Activated CD4-positive, alpha-beta T cell treated with anti-CD3 and anti-CD28 coated beads, Interleukin-2, amount 10 ng/mL, durations not matched to agents 24 days and 14 days (primary cell): ENCODE measurements at regions of chr12 and their contacts with region 1.

Region 1: DNA sequence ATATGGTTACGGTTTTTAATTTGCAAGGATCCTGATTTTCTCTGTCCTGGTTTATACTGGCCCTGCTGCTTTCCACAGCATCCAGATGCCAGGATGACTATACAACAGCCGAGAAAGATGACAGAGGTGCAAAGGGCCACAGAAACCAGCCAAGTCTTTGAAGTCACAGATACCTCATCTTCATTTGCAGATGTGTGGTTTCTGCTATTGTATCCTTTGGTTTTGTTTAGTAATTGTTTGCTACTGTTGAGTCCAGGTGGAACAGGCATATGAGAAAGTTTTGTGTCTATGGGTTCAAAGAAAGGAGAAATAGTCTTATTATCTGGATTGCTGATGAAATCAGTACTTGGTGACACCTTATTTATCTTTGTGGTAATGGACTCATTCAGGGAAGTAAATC is 17.3 kb upstream of the KLHL42 start:
- DNase-seq: peak; percentile 69
- H3K4me3 Mint-ChIP-seq: no peak overlapping the region
- H3K27ac Mint-ChIP-seq: no peak overlapping the region
- H3K4me1 Mint-ChIP-seq: peaks cover 15% of the 10 kb centered on the region
- H3K27me3 Mint-ChIP-seq: no peaks in the 10 kb centered on the region

Region 2: DNA sequence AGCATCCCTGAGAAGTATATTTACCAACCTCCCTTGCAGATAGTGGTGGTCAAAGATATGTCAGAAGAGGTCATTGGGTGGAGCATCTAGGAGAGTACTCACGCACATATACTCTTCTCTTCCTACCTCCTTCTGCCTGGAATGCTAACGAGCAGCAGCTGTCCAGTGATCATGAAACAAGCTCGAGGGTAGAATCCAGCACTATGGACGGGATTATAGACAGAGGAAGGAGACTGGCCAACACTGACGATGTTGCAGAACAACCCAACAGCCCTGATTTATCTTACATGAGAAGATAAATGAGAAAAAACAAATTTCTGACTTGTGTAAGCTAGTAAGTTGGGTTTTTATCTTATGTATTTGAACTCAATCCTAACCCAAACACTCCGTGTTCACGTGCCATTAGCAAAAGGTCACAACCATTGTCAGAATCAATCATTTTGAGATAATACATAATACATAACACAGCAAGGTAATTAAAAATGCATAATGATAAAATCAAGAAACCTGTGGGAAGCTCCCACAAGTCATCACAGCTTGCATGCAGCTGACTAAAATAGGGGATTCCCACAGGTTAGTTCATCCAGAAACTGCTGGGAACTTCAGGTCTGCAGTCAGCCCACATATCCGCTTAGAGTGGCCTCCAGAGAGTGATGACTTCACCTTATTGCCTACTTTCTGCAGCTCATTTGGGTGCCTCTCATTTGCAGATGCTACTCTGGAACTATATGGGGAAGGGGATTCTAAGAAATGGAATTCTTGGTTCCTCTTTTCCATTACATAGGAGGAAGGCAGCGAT is 554.9 kb before region 1 on chr12:
- intact Hi-C with region 1: no loop called
- DNase-seq: peak; percentile 76
- H3K4me3 Mint-ChIP-seq: no peak overlapping the region
- H3K27ac Mint-ChIP-seq: peak overlapping the region; percentile 47
- H3K4me1 Mint-ChIP-seq: peaks cover 21% of the 10 kb centered on the region
- H3K27me3 Mint-ChIP-seq: no peaks in the 10 kb centered on the region

Region 3: DNA sequence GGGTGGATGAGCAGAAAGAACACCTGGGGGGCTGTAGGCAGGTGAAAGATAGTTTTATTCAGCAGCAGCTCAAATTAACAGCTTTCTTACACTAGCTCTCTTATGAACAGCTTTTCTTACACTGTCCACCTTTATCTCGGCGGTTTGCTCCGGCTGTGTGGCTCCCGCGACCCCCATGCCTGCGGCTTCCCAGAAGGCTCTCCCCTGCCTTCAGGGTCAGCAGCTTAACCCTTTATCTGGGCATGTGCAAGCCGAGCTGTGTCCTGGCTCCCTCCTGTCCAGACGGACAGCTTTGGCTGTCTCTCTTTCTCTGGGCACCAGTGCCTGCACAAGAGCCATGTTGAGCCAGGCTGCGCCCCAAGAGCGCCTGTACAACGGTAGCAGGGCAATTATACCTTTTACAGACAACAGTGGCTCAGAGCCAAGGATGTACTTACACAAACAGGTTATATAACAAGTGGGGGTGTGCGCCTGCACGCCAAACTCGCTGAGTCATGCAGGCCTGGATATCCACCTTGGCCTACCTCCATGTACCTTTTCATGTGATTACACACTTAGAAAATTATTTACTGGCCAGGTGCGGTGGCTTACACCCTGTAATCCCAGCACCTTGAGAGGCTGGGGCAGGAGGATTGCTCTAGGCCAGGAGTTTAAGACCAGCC is 11.2 kb before region 1 on chr12:
- intact Hi-C with region 1: no loop called
- DNase-seq: no peak
- H3K4me3 Mint-ChIP-seq: no peak overlapping the region
- H3K27ac Mint-ChIP-seq: no peak overlapping the region
- H3K4me1 Mint-ChIP-seq: peaks cover 3% of the 10 kb centered on the region
- H3K27me3 Mint-ChIP-seq: no peaks in the 10 kb centered on the region

Region 4: DNA sequence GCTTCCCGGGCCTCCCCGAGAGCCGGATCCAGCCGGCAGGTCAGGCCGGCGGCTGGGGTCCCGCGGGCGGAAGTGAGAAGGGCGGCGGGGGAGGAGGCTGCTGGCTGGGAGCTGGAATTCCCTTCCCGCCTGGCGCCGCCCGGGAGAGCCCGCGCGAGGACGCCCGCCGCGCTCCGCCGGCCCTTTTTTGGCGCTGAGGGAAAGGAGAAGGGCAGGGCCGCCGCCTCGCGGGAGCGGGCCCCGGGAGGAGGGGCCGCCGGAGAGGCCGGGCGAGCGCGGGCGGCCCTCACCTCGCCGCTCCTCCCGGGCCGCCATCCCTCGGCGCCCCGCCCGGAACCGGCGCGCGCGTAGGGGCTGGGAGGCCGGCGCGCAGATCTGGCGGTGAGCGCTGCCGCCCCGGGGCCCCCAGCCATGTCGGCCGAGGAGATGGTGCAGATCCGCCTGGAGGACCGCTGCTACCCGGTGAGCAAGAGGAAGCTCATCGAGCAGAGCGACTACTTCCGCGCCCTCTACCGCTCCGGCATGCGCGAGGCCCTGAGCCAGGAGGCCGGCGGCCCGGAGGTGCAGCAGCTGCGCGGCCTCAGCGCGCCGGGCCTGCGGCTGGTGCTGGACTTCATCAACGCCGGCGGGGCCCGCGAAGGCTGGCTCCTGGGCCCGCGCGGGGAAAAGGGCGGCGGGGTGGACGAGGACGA is 17.3 kb after region 1 on chr12 and contains the starts of genes KLHL42 and MANSC4:
- intact Hi-C with region 1: loop called (anchors 2 kb)
- DNase-seq: peak; percentile 91
- H3K4me3 Mint-ChIP-seq: peak within 1 kb of the TSS; percentile 84
- H3K27ac Mint-ChIP-seq: peak within 1 kb of the TSS; percentile 82
- H3K4me1 Mint-ChIP-seq: peaks cover 29% of the 10 kb centered on the region
- H3K27me3 Mint-ChIP-seq: peaks cover 20% of the 10 kb centered on the region
- total RNA-seq, gene KLHL42: 13.6 and 14.5 TPM in 2 replicates
- total RNA-seq, gene MANSC4: not detected in 2 replicates

Region 5: DNA sequence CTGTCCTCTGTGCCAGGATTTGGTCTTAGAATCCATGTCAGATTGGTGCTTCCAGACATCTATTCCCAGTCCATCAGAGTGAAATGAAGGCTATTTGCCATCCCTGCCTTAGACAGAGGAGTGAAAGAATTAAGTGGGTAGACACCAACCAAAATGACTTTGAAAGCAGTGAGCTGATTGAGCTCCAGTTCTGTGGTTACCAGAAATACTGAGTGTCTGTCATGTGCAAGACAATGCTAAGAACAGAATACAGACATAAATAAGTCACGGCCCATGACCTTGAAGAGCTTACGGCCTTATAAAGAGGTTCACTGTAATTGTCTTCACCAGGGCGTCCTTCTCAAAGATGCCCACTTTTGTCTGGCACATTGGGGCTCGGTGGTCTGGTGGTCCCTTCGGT is 38.9 kb after region 1 on chr12:
- intact Hi-C with region 1: loop called (anchors 2 kb)
- DNase-seq: no peak
- H3K4me3 Mint-ChIP-seq: no peak overlapping the region
- H3K27ac Mint-ChIP-seq: peak overlapping the region; percentile 84
- H3K4me1 Mint-ChIP-seq: peaks cover 30% of the 10 kb centered on the region
- H3K27me3 Mint-ChIP-seq: peaks cover 5% of the 10 kb centered on the region

Region 6: DNA sequence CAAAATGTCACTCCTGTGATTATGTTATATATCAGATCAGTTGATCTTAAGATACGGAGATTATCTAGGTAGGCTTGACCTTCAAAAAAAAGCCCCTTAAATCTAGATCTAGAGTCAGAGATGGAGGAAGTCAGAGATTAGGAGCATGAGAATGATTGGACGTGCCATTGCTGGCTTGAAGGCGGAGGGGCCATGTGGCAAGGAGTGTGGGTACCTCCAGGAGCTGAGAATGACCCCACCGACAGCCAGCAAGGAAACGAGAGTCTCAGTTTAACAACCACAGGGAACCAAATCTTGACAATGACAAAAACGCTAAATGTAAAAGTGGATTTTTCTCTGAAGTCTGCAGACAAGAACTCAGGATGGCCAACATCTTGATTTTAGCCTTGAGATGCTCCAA is 49.7 kb after region 1 on chr12:
- intact Hi-C with region 1: no loop called
- DNase-seq: no peak
- H3K4me3 Mint-ChIP-seq: no peak overlapping the region
- H3K27ac Mint-ChIP-seq: no peak overlapping the region
- H3K4me1 Mint-ChIP-seq: peaks cover 11% of the 10 kb centered on the region
- H3K27me3 Mint-ChIP-seq: peaks cover 20% of the 10 kb centered on the region